CD4-positive, alpha-beta memory T cell (primary cell): ENCODE measurements at regions of chr13 and their contacts with region 1.

Region 1: GRCh38 chr13:22061351-22061805 is 390.5 kb downstream of the FGF9 start:
- DNase-seq: peak; percentile 56 to 81 (median 65)
- H3K4me3 ChIP-seq: no peak overlapping the region
- H3K4me3 Mint-ChIP-seq: peak overlapping the region; percentile 7 to 83 (median 67)
- H3K27ac ChIP-seq: peak overlapping the region; percentile 76
- H3K27ac Mint-ChIP-seq: peak overlapping the region; percentile 92 to 100 (median 99)
- H3K4me1 ChIP-seq: peaks cover 96% of the 10 kb centered on the region
- H3K4me1 Mint-ChIP-seq: peaks cover 72 to 98% (median 83%) of the 10 kb centered on the region in 4 donors
- H3K27me3 ChIP-seq: no peaks in the 10 kb centered on the region
- H3K27me3 Mint-ChIP-seq: no peaks in the 10 kb centered on the region

Region 2: GRCh38 chr13:21638319-21639282 is 422.8 kb before region 1 on chr13:
- CTCF ChIA-PET with region 1: interaction called, 45 read pairs
- POLR2A ChIA-PET with region 1: interaction called, 13 read pairs
- intact Hi-C with region 1: loop called (anchors 1 kb)
- DNase-seq: peak in 4 of 5 donors; percentile 37 to 49 (median 42)
- H3K4me3 ChIP-seq: no peak overlapping the region
- H3K4me3 Mint-ChIP-seq: no peak overlapping the region
- H3K27ac ChIP-seq: no peak overlapping the region
- H3K27ac Mint-ChIP-seq: peak overlapping the region in 1 of 7 donors; percentile 37
- H3K4me1 ChIP-seq: no peaks in the 10 kb centered on the region
- H3K4me1 Mint-ChIP-seq: peaks cover 0 to 5% (median 0%) of the 10 kb centered on the region in 4 donors
- H3K27me3 ChIP-seq: no peaks in the 10 kb centered on the region
- H3K27me3 Mint-ChIP-seq: peaks cover 2 to 7% of the 10 kb centered on the region in 2 donors

Region 3: DNA sequence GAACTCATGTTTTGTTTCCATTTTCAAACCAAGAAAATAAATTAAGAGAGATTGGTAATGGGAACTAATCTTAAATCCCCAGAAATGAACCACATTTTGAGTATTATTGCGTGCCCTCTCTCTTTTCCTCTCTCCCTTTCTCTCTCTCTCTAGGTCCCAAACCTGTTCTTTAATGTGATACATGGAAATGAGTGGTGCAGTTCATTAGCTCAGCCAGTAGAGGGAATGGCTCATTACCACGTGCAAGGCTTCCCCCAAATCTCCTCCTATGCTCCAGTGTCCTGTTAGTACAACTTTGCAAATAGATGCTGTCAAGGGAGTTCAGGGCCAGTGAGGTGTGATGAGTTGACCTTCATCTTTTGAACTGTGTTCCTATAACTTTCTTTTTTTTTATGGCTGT is 212.1 kb before region 1 on chr13:
- CTCF ChIA-PET with region 1: interaction called, 6 read pairs
- POLR2A ChIA-PET with region 1: interaction called, 3 read pairs
- intact Hi-C with region 1: loop called (anchors 1 kb)
- DNase-seq: peak in 4 of 5 donors; percentile 25 to 32 (median 29)
- H3K4me3 ChIP-seq: no peak overlapping the region
- H3K4me3 Mint-ChIP-seq: no peak overlapping the region
- H3K27ac ChIP-seq: no peak overlapping the region
- H3K27ac Mint-ChIP-seq: no peak overlapping the region
- H3K4me1 ChIP-seq: no peaks in the 10 kb centered on the region
- H3K4me1 Mint-ChIP-seq: peaks cover 0 to 6% (median 5%) of the 10 kb centered on the region in 4 donors
- H3K27me3 ChIP-seq: no peaks in the 10 kb centered on the region
- H3K27me3 Mint-ChIP-seq: peaks cover 0 to 6% of the 10 kb centered on the region in 2 donors

Region 4: GRCh38 chr13:22073718-22074117 is 12.3 kb after region 1 on chr13:
- CTCF ChIA-PET with region 1: interaction called, 19 read pairs
- POLR2A ChIA-PET with region 1: interaction called, 35 read pairs
- intact Hi-C with region 1: loop called (anchors 1 kb)
- DNase-seq: no peak
- H3K4me3 ChIP-seq: no peak overlapping the region
- H3K4me3 Mint-ChIP-seq: peak overlapping the region in 4 of 8 donors; percentile 5 to 43 (median 28)
- H3K27ac ChIP-seq: no peak overlapping the region
- H3K27ac Mint-ChIP-seq: peak overlapping the region in 4 of 7 donors; percentile 7 to 63 (median 34)
- H3K4me1 ChIP-seq: peaks cover 35% of the 10 kb centered on the region
- H3K4me1 Mint-ChIP-seq: peaks cover 27 to 38% (median 33%) of the 10 kb centered on the region in 4 donors
- H3K27me3 ChIP-seq: no peaks in the 10 kb centered on the region
- H3K27me3 Mint-ChIP-seq: no peaks in the 10 kb centered on the region

Region 5: GRCh38 chr13:22107548-22107947 is 46.2 kb after region 1 on chr13:
- CTCF ChIA-PET with region 1: interaction called, 17 read pairs
- POLR2A ChIA-PET with region 1: interaction called, 18 read pairs
- intact Hi-C with region 1: no loop called
- DNase-seq: peak in 2 of 5 donors; percentile 13 to 18
- H3K4me3 ChIP-seq: no peak overlapping the region
- H3K4me3 Mint-ChIP-seq: peak overlapping the region; percentile 5 to 76 (median 54)
- H3K27ac ChIP-seq: peak overlapping the region; percentile 13
- H3K27ac Mint-ChIP-seq: peak overlapping the region; percentile 9 to 94 (median 81)
- H3K4me1 ChIP-seq: peaks cover 40% of the 10 kb centered on the region
- H3K4me1 Mint-ChIP-seq: peaks cover 35 to 69% (median 56%) of the 10 kb centered on the region in 4 donors
- H3K27me3 ChIP-seq: no peaks in the 10 kb centered on the region
- H3K27me3 Mint-ChIP-seq: no peaks in the 10 kb centered on the region

Region 6: GRCh38 chr13:22161871-22162270 is 100.5 kb after region 1 on chr13:
- CTCF ChIA-PET with region 1: interaction called, 3 read pairs
- POLR2A ChIA-PET with region 1: no interaction called
- intact Hi-C with region 1: loop called (anchors 2 kb)
- DNase-seq: peak in 4 of 5 donors; percentile 4 to 36 (median 28)
- H3K4me3 ChIP-seq: peak overlapping the region in 1 of 2 donors; percentile 20
- H3K4me3 Mint-ChIP-seq: peak overlapping the region; percentile 73 to 86 (median 81)
- H3K27ac ChIP-seq: no peak overlapping the region
- H3K27ac Mint-ChIP-seq: peak overlapping the region; percentile 28 to 91 (median 79)
- H3K4me1 ChIP-seq: peaks cover 33% of the 10 kb centered on the region
- H3K4me1 Mint-ChIP-seq: peaks cover 29 to 46% (median 37%) of the 10 kb centered on the region in 4 donors
- H3K27me3 ChIP-seq: no peaks in the 10 kb centered on the region
- H3K27me3 Mint-ChIP-seq: no peaks in the 10 kb centered on the region

Region 7: DNA sequence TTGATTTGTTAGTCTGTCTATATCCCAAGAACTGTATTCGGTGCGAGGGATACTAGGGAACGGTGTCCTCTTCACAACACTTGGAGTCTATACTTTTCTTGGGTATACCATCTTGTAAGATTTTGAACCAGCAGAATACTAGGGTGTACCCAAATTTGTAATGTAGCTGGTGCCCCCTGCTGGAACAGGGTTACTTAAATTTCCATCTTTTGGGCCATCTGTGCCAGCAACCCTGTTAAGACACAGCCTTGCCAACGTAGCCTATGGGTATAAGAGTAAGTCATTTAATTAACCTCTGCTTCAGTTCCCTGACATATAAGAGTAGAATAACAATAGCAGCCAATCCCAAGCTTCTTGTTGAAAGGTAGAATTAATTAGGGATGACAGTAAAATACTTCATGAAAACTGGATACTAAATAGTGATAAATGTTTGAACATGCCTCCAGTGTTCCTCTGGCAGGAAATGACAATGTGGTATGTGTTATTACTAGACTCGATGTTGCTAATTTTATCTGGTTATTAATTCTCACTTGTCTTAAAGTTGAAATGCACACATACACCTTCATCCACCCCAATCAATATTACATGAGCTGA is 217.1 kb after region 1 on chr13:
- CTCF ChIA-PET with region 1: interaction called, 31 read pairs
- POLR2A ChIA-PET with region 1: interaction called, 3 read pairs
- intact Hi-C with region 1: loop called (anchors 1 kb)
- DNase-seq: peak; percentile 56 to 70 (median 66)
- H3K4me3 ChIP-seq: no peak overlapping the region
- H3K4me3 Mint-ChIP-seq: no peak overlapping the region
- H3K27ac ChIP-seq: no peak overlapping the region
- H3K27ac Mint-ChIP-seq: peak overlapping the region in 1 of 7 donors; percentile 2
- H3K4me1 ChIP-seq: no peaks in the 10 kb centered on the region
- H3K4me1 Mint-ChIP-seq: peaks cover 2 to 10% (median 4%) of the 10 kb centered on the region in 4 donors
- H3K27me3 ChIP-seq: no peaks in the 10 kb centered on the region
- H3K27me3 Mint-ChIP-seq: no peaks in the 10 kb centered on the region